ENCODE measurements at regions of chrX and their contacts with region 1.

Region 1: GRCh38 chrX:23782863-23783568 is at the start of gene SAT1:
- DNase-seq: peak; percentile 96
- ATAC-seq: peak; percentile 75
- H3K4me3 ChIP-seq: peak within 1 kb of the TSS; percentile 97
- H3K27ac ChIP-seq: peak within 1 kb of the TSS; percentile 94
- H3K4me1 ChIP-seq: peaks cover 45% of the 10 kb centered on the region
- H3K27me3 ChIP-seq: no peaks in the 10 kb centered on the region
- CTCF ChIP-seq: peak; percentile 87
- total RNA-seq, gene SAT1: 414 and 448 TPM in 2 replicates

Region 2: GRCh38 chrX:23694606-23695005 is 88.4 kb before region 1 on chrX:
- CTCF ChIA-PET with region 1: no interaction called
- POLR2A ChIA-PET with region 1: no interaction called
- intact Hi-C with region 1: loop called (anchors 5 kb)
- DNase-seq: peak; percentile 72
- ATAC-seq: peak; percentile 74
- H3K4me3 ChIP-seq: no peak overlapping the region
- H3K27ac ChIP-seq: no peak overlapping the region
- H3K4me1 ChIP-seq: no peaks in the 10 kb centered on the region
- H3K27me3 ChIP-seq: no peaks in the 10 kb centered on the region
- CTCF ChIP-seq: peak; percentile 42; the same call in 1 of the 2 replicates

Region 3: DNA sequence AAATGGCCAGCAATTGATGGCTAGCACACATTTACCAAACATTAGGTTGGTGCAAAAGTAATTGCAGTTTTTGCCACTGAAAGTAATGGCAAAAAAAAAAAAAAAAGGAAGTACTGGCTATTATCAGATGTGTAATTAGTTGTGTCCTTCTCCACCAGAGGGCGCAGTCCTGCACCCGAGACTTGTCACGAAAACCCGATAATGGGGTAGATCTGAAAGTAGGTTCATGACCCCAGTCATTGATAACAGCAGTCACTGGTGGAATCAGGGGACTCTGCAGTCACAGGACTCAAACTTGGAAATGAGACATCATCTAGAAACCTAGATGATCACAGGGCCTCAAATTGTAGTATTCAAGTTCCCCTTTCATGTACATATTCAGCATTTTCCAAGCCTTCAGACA is 26.9 kb before region 1 on chrX:
- CTCF ChIA-PET with region 1: no interaction called
- POLR2A ChIA-PET with region 1: no interaction called
- intact Hi-C with region 1: loop called (anchors 1 kb)
- DNase-seq: peak; percentile 55
- ATAC-seq: no peak
- H3K4me3 ChIP-seq: no peak overlapping the region
- H3K27ac ChIP-seq: no peak overlapping the region
- H3K4me1 ChIP-seq: peaks cover 24% of the 10 kb centered on the region
- H3K27me3 ChIP-seq: no peaks in the 10 kb centered on the region
- CTCF ChIP-seq: peak; percentile 75

Region 4: GRCh38 chrX:23822397-23822796 is 39.4 kb after region 1 on chrX:
- CTCF ChIA-PET with region 1: interaction called, 3 read pairs
- POLR2A ChIA-PET with region 1: no interaction called
- intact Hi-C with region 1: loop called (anchors 1 kb)
- DNase-seq: peak; percentile 69
- ATAC-seq: peak; percentile 93
- H3K4me3 ChIP-seq: no peak overlapping the region
- H3K27ac ChIP-seq: peak overlapping the region; percentile 98
- H3K4me1 ChIP-seq: peaks cover 27% of the 10 kb centered on the region
- H3K27me3 ChIP-seq: no peaks in the 10 kb centered on the region
- CTCF ChIP-seq: no peak

Region 5: DNA sequence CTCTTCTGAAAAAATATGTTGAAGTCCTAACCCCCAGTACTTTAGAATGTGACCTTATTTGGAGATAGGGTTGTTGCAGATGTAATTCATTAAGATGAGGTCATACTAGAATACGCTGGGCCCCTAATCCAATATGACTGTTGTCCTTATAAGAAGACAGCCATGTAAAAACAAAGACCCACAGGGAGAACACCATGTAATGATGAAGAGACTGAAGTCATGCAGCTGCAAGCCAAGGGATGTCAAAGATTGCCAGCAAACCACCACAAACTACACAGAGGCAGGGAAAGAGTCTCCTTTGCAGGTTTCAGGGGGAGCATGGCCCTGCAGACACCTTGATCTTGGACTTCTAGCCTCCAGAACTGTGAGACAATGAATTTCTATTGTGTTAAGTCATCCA is 162.2 kb after region 1 on chrX:
- CTCF ChIA-PET with region 1: no interaction called
- POLR2A ChIA-PET with region 1: no interaction called
- intact Hi-C with region 1: no loop called
- DNase-seq: no peak
- ATAC-seq: no peak
- H3K4me3 ChIP-seq: no peak overlapping the region
- H3K27ac ChIP-seq: no peak overlapping the region
- H3K4me1 ChIP-seq: no peaks in the 10 kb centered on the region
- H3K27me3 ChIP-seq: peaks cover 12% of the 10 kb centered on the region; the same call in 1 of the 2 replicates
- CTCF ChIP-seq: no peak

Region 6: GRCh38 chrX:24002167-24002566 is 219.2 kb after region 1 on chrX:
- CTCF ChIA-PET with region 1: no interaction called
- POLR2A ChIA-PET with region 1: no interaction called
- intact Hi-C with region 1: no loop called
- DNase-seq: no peak
- ATAC-seq: no peak
- H3K4me3 ChIP-seq: no peak overlapping the region
- H3K27ac ChIP-seq: no peak overlapping the region
- H3K4me1 ChIP-seq: peaks cover 6% of the 10 kb centered on the region; the same call in 1 of the 2 replicates
- H3K27me3 ChIP-seq: no peaks in the 10 kb centered on the region
- CTCF ChIP-seq: no peak

Region 7: GRCh38 chrX:24054182-24055042 is 271.4 kb after region 1 on chrX and contains the start of gene EIF2S3:
- CTCF ChIA-PET with region 1: no interaction called
- POLR2A ChIA-PET with region 1: interaction called, 10 read pairs
- intact Hi-C with region 1: loop called (anchors 1 kb)
- DNase-seq: peak; percentile 91
- ATAC-seq: peak; percentile 90
- H3K4me3 ChIP-seq: no peak within 1 kb of the TSS
- H3K27ac ChIP-seq: peak within 1 kb of the TSS; percentile 94
- H3K4me1 ChIP-seq: peaks cover 14% of the 10 kb centered on the region
- H3K27me3 ChIP-seq: no peaks in the 10 kb centered on the region
- CTCF ChIP-seq: peak; percentile 70
- total RNA-seq, gene EIF2S3: 178 and 201 TPM in 2 replicates

Region 8: GRCh38 chrX:24321741-24322395 is 538.9 kb after region 1 on chrX:
- CTCF ChIA-PET with region 1: no interaction called
- POLR2A ChIA-PET with region 1: no interaction called
- intact Hi-C with region 1: no loop called
- DNase-seq: no peak
- ATAC-seq: no peak
- H3K4me3 ChIP-seq: no peak overlapping the region
- H3K27ac ChIP-seq: no peak overlapping the region
- H3K4me1 ChIP-seq: no peaks in the 10 kb centered on the region
- H3K27me3 ChIP-seq: 0 out of 2 replicates have a peak, but pooled peaks cover 5% of the 10 kb centered on the region
- CTCF ChIP-seq: no peak

Measured in PC-3 (cell line).